Heart left ventricle (tissue), 16 donors: ENCODE measurements at regions of chr13 and their contacts with region 1.

Region 1: GRCh38 chr13:76684336-76684735 is 201.9 kb downstream of the KCTD12 start:
- DNase-seq: no peak
- ATAC-seq: no peak
- H3K4me3 ChIP-seq: no peak overlapping the region
- H3K27ac ChIP-seq: peak overlapping the region in 1 of 12 donors; percentile 13
- H3K4me1 ChIP-seq: peaks cover 0 to 22% (median 5%) of the 10 kb centered on the region in 12 donors
- H3K27me3 ChIP-seq: no peaks in the 10 kb centered on the region
- CTCF ChIP-seq: no peak
- POLR2A ChIP-seq: no peak

Region 2: DNA sequence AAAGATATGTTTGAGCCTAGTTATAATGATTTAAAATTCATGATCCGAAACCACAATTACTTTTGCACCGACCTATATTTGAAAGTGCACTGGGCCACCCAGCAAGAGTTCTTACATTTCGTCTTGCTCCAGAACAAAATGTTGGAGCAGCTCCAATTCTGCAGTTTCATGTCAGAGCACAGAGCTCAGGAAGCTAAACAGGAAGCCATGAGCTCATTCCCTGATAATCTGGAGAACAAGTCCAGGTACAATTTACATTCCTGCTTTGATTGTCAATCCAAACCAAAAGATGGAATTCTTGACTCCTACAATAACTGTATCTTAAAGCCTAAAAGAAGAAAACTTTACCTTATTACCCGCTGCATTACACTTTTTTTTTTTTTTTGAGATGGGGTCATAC is 70.1 kb after region 1 on chr13:
- intact Hi-C with region 1: loop called in 1 of 10 experiments (anchors 2 kb)
- DNase-seq: peak in 4 of 5 donors; percentile 27 to 70 (median 52)
- ATAC-seq: peak; percentile 71 to 92 (median 76)
- H3K4me3 ChIP-seq: no peak overlapping the region
- H3K27ac ChIP-seq: peak overlapping the region in 9 of 12 donors; percentile 6 to 62 (median 31)
- H3K4me1 ChIP-seq: peaks cover 0 to 40% (median 1%) of the 10 kb centered on the region in 12 donors
- H3K27me3 ChIP-seq: no peaks in the 10 kb centered on the region
- CTCF ChIP-seq: no peak
- POLR2A ChIP-seq: no peak